Naive thymus-derived CD4-positive, alpha-beta T cell (primary cell): ENCODE measurements at regions of chr17 and their contacts with region 1.

Region 1: DNA sequence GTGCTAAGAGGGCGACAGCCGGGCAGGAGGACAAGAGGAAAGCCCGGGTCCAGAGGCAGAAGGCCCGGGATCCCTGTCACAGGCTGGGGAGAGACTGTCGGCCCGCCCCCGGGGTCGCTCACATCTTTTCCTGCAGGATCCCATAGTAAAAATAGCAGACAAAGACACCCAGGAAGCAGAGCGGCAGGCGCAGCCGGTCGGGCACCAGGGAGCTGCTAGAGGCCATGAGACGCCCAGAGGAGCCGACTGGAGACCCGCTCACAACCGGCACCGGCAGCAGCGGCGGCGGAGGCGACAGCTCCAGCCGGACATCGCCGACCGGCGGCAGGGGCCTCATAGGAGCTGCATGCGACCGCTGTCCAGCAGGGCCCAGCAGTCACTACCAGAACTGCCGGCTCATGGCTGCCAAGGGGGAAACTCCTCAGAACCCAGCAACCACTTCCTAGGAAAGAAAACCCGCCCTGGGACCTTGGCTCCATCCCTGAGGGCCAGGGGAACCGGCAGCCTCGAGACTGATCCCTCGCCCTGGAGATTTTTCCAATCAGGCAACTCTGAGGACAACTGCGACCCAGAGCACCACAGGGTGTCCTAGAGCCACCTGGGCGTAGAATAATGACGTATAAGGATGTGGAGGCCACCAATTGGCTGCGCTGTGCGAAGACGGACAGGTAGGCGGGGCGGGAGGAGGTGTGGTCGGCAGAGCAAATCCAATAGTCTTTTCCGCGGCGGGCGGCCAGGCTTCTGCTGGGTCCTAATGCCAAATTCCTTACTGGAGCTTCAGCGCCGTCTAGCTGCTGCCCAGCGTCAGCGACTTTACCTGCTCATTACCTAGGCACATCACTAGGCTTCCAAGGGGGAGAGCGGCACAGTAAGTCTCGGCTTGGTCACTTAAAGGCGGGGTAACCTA is at the start of gene SLC35B1:
- DNase-seq: peak; percentile 89 to 99 (median 97)
- ATAC-seq: peak; percentile 98
- H3K4me3 ChIP-seq: peak within 1 kb of the TSS; percentile 96
- H3K4me3 Mint-ChIP-seq: peak within 1 kb of the TSS; percentile 91 to 97 (median 96)
- H3K27ac ChIP-seq: peak within 1 kb of the TSS; percentile 94
- H3K27ac Mint-ChIP-seq: peak within 1 kb of the TSS; percentile 89 to 99 (median 96)
- H3K4me1 ChIP-seq: peaks cover 22 to 27% of the 10 kb centered on the region in 2 donors
- H3K4me1 Mint-ChIP-seq: peaks cover 30 to 47% (median 42%) of the 10 kb centered on the region in 7 donors
- H3K27me3 ChIP-seq: no peaks in the 10 kb centered on the region
- H3K27me3 Mint-ChIP-seq: no peaks in the 10 kb centered on the region
- total RNA-seq, gene SLC35B1: 42.1 to 83.0 (median 49.0) TPM

Region 2: DNA sequence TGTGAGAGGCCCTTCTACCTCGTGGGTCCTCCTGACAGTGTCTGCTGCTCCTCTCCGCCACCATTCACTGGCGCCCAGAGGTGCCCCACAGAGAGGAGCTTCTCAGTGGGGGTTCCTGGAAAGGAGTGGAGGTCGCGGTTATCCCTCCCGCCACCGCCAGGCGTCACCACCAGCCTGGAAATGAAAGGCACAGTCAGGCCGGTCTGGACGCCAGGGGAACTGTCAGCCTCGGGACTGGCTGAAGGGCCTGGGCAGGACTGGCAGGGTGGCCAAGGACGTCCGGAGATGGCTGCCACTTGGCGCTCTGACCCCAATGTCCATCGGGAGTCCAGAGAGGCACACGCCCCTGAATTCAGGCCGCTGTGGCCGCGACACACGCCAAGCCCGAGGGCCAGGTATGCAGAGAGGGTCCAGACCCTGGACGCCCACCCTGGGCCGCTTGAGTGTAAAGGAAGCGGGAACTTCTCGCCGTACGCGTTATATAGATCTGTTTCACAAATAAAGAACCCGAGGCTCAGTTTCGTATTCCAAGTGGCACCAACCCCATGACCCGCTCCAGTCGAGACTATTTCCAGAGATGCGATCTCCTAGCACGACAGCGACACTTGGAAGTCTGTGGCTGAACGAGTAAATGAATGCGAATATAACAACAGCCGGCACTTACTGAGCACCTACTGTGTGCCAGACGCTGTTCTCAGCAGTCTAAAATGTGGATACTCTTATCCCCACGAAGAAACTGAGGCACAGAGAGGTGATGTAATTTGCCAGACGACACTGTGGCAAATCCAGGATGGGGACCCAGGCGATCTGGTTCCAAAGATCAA is 139.8 kb before region 1 on chr17:
- CTCF ChIA-PET with region 1: interaction called, 15 read pairs
- POLR2A ChIA-PET with region 1: interaction called, 12 read pairs
- intact Hi-C with region 1: loop called (anchors 1 kb)
- DNase-seq: peak; percentile 50 to 88 (median 72)
- ATAC-seq: peak; percentile 64
- H3K4me3 ChIP-seq: peak overlapping the region; percentile 15
- H3K4me3 Mint-ChIP-seq: peak overlapping the region; percentile 53 to 80 (median 70)
- H3K27ac ChIP-seq: no peak overlapping the region
- H3K27ac Mint-ChIP-seq: peak overlapping the region in 1 of 9 donors; percentile 7
- H3K4me1 ChIP-seq: peaks cover 6 to 7% of the 10 kb centered on the region in 2 donors
- H3K4me1 Mint-ChIP-seq: peaks cover 0 to 28% (median 15%) of the 10 kb centered on the region in 7 donors
- H3K27me3 ChIP-seq: no peaks in the 10 kb centered on the region
- H3K27me3 Mint-ChIP-seq: peaks cover under 1 to 38% (median 4%) of the 10 kb centered on the region in 5 donors

Region 3: GRCh38 chr17:49722066-49722465 is 14.2 kb after region 1 on chr17:
- CTCF ChIA-PET with region 1: interaction called, 6 read pairs
- POLR2A ChIA-PET with region 1: interaction called, 22 read pairs
- intact Hi-C with region 1: no loop called
- DNase-seq: no peak
- ATAC-seq: no peak
- H3K4me3 ChIP-seq: no peak overlapping the region
- H3K4me3 Mint-ChIP-seq: no peak overlapping the region
- H3K27ac ChIP-seq: no peak overlapping the region
- H3K27ac Mint-ChIP-seq: peak overlapping the region in 6 of 9 donors; percentile 28 to 84 (median 64)
- H3K4me1 ChIP-seq: peaks cover 0 to 17% of the 10 kb centered on the region in 2 donors
- H3K4me1 Mint-ChIP-seq: peaks cover 16 to 34% (median 27%) of the 10 kb centered on the region in 7 donors
- H3K27me3 ChIP-seq: no peaks in the 10 kb centered on the region
- H3K27me3 Mint-ChIP-seq: no peaks in the 10 kb centered on the region

Region 4: GRCh38 chr17:49748791-49749190 is 40.9 kb after region 1 on chr17:
- CTCF ChIA-PET with region 1: interaction called, 11 read pairs
- POLR2A ChIA-PET with region 1: interaction called, 81 read pairs
- intact Hi-C with region 1: no loop called
- DNase-seq: peak in 6 of 9 donors; percentile 43 to 61 (median 48)
- ATAC-seq: peak; percentile 79
- H3K4me3 ChIP-seq: no peak overlapping the region
- H3K4me3 Mint-ChIP-seq: peak overlapping the region; percentile 60 to 87 (median 76)
- H3K27ac ChIP-seq: peak overlapping the region; percentile 84
- H3K27ac Mint-ChIP-seq: peak overlapping the region; percentile 88 to 98 (median 97)
- H3K4me1 ChIP-seq: peaks cover 70 to 76% of the 10 kb centered on the region in 2 donors
- H3K4me1 Mint-ChIP-seq: peaks cover 49 to 92% (median 76%) of the 10 kb centered on the region in 7 donors
- H3K27me3 ChIP-seq: no peaks in the 10 kb centered on the region
- H3K27me3 Mint-ChIP-seq: no peaks in the 10 kb centered on the region

Region 5: DNA sequence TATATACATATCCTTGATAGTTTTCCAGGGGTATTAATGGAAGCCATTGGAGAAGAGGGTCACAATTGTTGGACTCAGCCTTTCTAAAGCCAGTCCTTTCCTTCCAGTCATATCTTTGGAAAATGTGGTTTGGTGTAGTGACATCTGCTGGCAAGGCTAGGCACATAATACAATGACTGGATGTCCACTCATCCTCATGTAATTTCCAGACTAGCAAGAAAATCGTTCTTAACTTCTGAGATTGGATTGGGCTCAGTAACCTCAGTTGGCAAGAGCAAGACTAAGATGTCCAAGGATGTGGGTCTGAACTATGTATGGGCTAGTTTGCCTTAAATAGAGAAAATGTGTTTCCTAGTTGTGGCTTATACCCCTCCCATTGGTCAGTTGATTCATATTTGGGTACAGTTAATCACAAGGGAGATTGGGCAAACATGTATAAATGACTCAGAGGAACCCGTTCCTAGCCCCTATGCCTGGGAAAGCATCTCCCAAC is 71.9 kb after region 1 on chr17:
- CTCF ChIA-PET with region 1: interaction called, 25 read pairs
- POLR2A ChIA-PET with region 1: interaction called, 10 read pairs
- intact Hi-C with region 1: loop called in 1 of 2 experiments (anchors 1 kb)
- DNase-seq: peak in 4 of 9 donors; percentile 14 to 33 (median 24)
- ATAC-seq: peak; percentile 62
- H3K4me3 ChIP-seq: no peak overlapping the region
- H3K4me3 Mint-ChIP-seq: no peak overlapping the region
- H3K27ac ChIP-seq: no peak overlapping the region
- H3K27ac Mint-ChIP-seq: no peak overlapping the region
- H3K4me1 ChIP-seq: no peaks in the 10 kb centered on the region
- H3K4me1 Mint-ChIP-seq: peaks cover 0 to 11% (median 5%) of the 10 kb centered on the region in 7 donors
- H3K27me3 ChIP-seq: no peaks in the 10 kb centered on the region
- H3K27me3 Mint-ChIP-seq: peaks cover 0 to 7% (median 0%) of the 10 kb centered on the region in 5 donors

Region 6: DNA sequence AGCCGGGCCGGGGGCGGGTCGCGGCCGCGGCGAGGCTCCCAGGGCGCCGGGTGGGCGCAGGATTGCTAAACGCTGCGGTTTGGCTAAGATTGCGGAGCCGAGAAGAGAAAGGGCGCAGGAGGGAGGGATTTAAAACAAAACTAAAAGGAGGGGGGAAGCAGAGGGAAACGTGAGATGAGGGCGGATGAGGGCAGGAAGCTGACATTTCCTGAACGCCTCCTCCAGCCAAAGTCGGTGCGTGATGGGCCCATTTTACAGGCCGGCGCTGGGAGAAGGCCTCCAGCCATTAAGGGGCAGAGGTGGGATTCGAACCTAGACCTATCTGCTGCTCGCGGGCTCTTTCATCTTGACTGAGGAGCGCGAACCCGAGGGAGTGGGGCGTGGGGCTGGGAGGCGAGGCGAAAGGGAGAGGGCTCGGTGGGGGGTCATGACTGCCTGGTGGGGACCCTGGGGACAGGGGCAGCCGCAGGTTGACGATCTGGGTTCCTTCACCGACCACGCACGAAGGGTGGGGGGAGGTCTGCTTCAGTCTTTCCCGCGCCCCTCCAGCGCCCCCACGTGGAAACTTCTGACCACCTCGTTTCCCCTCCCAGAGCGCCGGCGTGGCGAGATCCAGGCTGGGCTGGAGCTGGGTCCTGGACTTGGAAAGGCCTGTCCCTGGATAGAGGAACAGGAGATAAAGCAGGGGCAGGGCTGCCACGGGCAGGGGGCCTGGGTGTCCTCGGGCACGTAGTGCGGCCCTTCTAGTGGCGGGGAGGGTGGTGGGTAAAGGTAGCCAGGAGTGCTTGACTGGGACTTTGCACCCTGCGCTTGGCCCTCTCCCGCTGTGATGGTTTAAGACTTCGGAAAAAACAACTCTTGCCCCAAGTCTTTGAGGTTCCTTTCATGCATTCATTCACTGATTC is 143.8 kb after region 1 on chr17:
- CTCF ChIA-PET with region 1: interaction called, 5 read pairs
- POLR2A ChIA-PET with region 1: interaction called, 10 read pairs
- intact Hi-C with region 1: loop called (anchors 1 kb)
- DNase-seq: peak; percentile 57 to 75 (median 67)
- ATAC-seq: peak; percentile 81
- H3K4me3 ChIP-seq: peak overlapping the region; percentile 67
- H3K4me3 Mint-ChIP-seq: peak overlapping the region; percentile 89 to 98 (median 94)
- H3K27ac ChIP-seq: peak overlapping the region; percentile 81
- H3K27ac Mint-ChIP-seq: peak overlapping the region; percentile 83 to 97 (median 95)
- H3K4me1 ChIP-seq: peaks cover 13 to 14% of the 10 kb centered on the region in 2 donors
- H3K4me1 Mint-ChIP-seq: peaks cover 10 to 30% (median 19%) of the 10 kb centered on the region in 7 donors
- H3K27me3 ChIP-seq: no peaks in the 10 kb centered on the region
- H3K27me3 Mint-ChIP-seq: peaks cover 0 to 9% (median 0%) of the 10 kb centered on the region in 5 donors